ENCODE measurements at regions of chr12 and their contacts with region 1.

Region 1: GRCh38 chr12:117236456-117237001 is 46.3 kb upstream of the FBXO21 start:
- DNase-seq: peak; percentile 99
- ATAC-seq: peak; percentile 80
- H3K4me3 Mint-ChIP-seq: no peak overlapping the region
- H3K27ac Mint-ChIP-seq: 0 out of 2 replicates have a peak overlapping the region, but pooled peaks have one; percentile 19
- H3K4me1 Mint-ChIP-seq: peaks cover 24% of the 10 kb centered on the region
- H3K27me3 Mint-ChIP-seq: no peaks in the 10 kb centered on the region
- CTCF ChIP-seq: peak; percentile 88

Region 2: DNA sequence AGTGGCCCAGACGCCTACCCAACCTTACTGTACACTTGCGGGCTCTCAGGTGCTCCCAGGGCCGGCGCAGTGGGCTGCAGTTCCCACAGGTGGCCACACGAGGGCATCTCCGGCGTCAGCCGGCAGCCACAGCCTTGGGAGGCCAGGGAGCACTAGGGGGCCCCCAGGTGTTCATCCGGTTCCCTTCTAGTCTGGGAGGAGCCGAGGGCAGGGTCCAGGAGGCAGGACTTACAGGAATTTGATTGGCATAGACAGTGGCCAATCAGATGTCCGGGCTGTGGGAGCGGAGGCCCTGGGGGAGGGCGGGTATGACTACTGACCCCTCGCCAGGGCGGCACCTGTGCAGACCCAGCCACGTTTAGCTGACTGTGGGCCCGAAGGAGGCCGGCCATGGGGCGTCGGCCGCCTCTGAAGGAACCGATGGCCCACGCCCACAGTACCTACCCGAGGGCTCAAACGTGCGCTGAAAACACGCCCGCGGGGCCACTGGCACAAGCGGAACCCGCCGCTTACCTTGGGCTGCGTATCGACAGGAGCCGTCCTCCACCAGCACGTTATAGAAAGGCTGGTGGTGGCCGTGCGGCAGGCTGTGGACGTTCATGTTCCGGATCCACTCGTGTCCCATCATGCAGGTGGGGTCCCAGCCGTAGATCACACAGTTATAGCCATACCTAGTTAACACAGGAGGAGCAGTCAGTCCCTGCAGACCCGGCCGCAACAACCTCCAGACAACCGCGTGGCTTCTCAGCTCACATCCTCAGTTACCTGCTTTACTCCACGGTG is 81.1 kb before region 1 on chr12:
- CTCF ChIA-PET with region 1: no interaction called
- POLR2A ChIA-PET with region 1: no interaction called
- DNase-seq: peak; percentile 100
- ATAC-seq: peak; percentile 98
- H3K4me3 Mint-ChIP-seq: no peak overlapping the region
- H3K27ac Mint-ChIP-seq: peak overlapping the region; percentile 76
- H3K4me1 Mint-ChIP-seq: peaks cover 22% of the 10 kb centered on the region
- H3K27me3 Mint-ChIP-seq: no peaks in the 10 kb centered on the region
- CTCF ChIP-seq: peak; percentile 98

Region 3: GRCh38 chr12:117167769-117168168 is 68.8 kb before region 1 on chr12:
- CTCF ChIA-PET with region 1: no interaction called
- POLR2A ChIA-PET with region 1: no interaction called
- DNase-seq: no peak
- ATAC-seq: no peak
- H3K4me3 Mint-ChIP-seq: no peak overlapping the region
- H3K27ac Mint-ChIP-seq: no peak overlapping the region
- H3K4me1 Mint-ChIP-seq: no peaks in the 10 kb centered on the region
- H3K27me3 Mint-ChIP-seq: no peaks in the 10 kb centered on the region
- CTCF ChIP-seq: no peak

Region 4: GRCh38 chr12:117279606-117280005 is 43.1 kb after region 1 on chr12:
- CTCF ChIA-PET with region 1: interaction called, 15 read pairs
- POLR2A ChIA-PET with region 1: no interaction called
- DNase-seq: peak; percentile 71
- ATAC-seq: peak; percentile 98
- H3K4me3 Mint-ChIP-seq: peak overlapping the region; percentile 18; the same call in 1 of the 2 replicates
- H3K27ac Mint-ChIP-seq: no peak overlapping the region
- H3K4me1 Mint-ChIP-seq: peaks cover 30% of the 10 kb centered on the region
- H3K27me3 Mint-ChIP-seq: no peaks in the 10 kb centered on the region
- CTCF ChIP-seq: no peak

Region 5: GRCh38 chr12:117360551-117361346 is 124.2 kb after region 1 on chr12:
- CTCF ChIA-PET with region 1: interaction called, 25 read pairs
- POLR2A ChIA-PET with region 1: no interaction called
- DNase-seq: peak; percentile 50
- ATAC-seq: peak; percentile 47
- H3K4me3 Mint-ChIP-seq: peak overlapping the region; percentile 82
- H3K27ac Mint-ChIP-seq: no peak overlapping the region
- H3K4me1 Mint-ChIP-seq: peaks cover 22% of the 10 kb centered on the region
- H3K27me3 Mint-ChIP-seq: peaks cover 74% of the 10 kb centered on the region
- CTCF ChIP-seq: no peak

Region 6: GRCh38 chr12:117671734-117672133 is 435.2 kb after region 1 on chr12:
- CTCF ChIA-PET with region 1: interaction called, 10 read pairs
- POLR2A ChIA-PET with region 1: no interaction called
- DNase-seq: peak; percentile 91
- ATAC-seq: peak; percentile 92
- H3K4me3 Mint-ChIP-seq: no peak overlapping the region
- H3K27ac Mint-ChIP-seq: 0 out of 2 replicates have a peak overlapping the region, but pooled peaks have one; percentile 32
- H3K4me1 Mint-ChIP-seq: peaks cover 8% of the 10 kb centered on the region
- H3K27me3 Mint-ChIP-seq: no peaks in the 10 kb centered on the region; the same call in 1 of the 2 replicates
- CTCF ChIP-seq: peak; percentile 53

Measured in WTC11 (cell line).